ENCODE measurements at regions of chr10 and their contacts with region 1.

Region 1: GRCh38 chr10:48765039-48765438 is 80.4 kb downstream of the WDFY4 start:
- DNase-seq: no peak
- H3K4me3 ChIP-seq: no peak overlapping the region
- H3K27ac ChIP-seq: no peak overlapping the region
- H3K4me1 ChIP-seq: no peaks in the 10 kb centered on the region
- H3K27me3 ChIP-seq: no peaks in the 10 kb centered on the region
- CTCF ChIP-seq: peak in 1 of 2 donors; percentile 11

Region 2: DNA sequence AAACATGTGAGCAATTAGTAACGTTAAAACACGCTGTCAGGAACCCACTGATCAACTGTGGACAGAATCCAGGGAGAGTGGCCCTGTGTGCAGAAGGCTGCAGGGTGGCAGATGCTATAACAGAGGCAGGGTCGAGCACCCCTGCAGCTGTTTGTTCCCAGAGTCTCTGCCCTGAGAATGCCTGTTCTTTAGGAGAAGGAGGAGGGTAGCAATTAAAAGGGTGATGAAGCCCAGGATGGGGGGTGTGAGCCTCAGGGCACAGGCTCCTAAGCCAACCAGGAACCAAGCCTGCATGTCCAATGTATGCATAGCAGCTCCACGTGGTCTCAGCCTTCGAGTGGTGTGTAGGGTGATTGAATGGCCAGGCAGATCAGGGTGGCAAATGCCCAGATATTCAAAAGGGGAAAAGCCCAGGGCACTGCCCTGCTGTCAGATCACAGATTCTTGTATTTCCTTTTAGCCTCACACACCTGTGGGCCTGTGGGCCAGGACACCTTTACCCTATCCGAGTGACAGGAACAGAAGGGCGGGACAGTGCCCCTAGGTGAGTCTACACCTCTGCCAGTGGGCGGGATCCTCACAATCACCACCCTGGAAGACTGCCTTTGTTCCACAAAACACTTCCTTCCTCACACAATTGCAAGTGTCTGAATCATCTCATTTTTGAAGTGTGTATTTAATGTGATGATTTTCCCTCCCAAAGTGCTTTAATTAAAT is 73.1 kb before region 1 on chr10:
- CTCF ChIA-PET with region 1: no interaction called
- dilution Hi-C with region 1: loop called (anchors 5 kb)
- in situ Hi-C with region 1: no loop called
- intact Hi-C with region 1: no loop called
- DNase-seq: no peak
- H3K4me3 ChIP-seq: no peak overlapping the region
- H3K27ac ChIP-seq: no peak overlapping the region
- H3K4me1 ChIP-seq: no peaks in the 10 kb centered on the region
- H3K27me3 ChIP-seq: peaks cover 2% of the 10 kb centered on the region
- CTCF ChIP-seq: no peak

Region 3: DNA sequence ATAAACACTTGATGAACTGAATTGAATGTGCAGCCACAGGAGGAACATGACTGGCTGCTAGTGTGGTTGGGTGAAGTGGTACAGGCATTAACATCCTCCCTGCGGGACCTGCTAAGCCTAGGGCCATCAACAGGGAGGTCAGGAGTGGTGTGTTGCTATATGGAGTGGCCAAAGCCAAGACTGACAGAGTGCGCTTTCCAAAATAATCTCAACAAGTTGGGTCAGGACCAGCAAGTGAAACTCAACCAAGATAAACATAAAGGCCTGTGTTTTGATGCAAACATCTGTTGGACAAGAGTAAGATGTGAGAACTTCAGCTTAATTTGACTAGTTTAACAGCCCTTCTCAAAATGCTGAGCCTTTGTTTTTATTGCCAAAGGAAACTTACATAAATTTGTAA is 17.3 kb after region 1 on chr10:
- CTCF ChIA-PET with region 1: no interaction called
- dilution Hi-C with region 1: no loop called
- in situ Hi-C with region 1: no loop called
- intact Hi-C with region 1: no loop called
- DNase-seq: no peak
- H3K4me3 ChIP-seq: no peak overlapping the region
- H3K27ac ChIP-seq: no peak overlapping the region
- H3K4me1 ChIP-seq: no peaks in the 10 kb centered on the region
- H3K27me3 ChIP-seq: peaks cover 5% of the 10 kb centered on the region
- CTCF ChIP-seq: no peak

Region 4: DNA sequence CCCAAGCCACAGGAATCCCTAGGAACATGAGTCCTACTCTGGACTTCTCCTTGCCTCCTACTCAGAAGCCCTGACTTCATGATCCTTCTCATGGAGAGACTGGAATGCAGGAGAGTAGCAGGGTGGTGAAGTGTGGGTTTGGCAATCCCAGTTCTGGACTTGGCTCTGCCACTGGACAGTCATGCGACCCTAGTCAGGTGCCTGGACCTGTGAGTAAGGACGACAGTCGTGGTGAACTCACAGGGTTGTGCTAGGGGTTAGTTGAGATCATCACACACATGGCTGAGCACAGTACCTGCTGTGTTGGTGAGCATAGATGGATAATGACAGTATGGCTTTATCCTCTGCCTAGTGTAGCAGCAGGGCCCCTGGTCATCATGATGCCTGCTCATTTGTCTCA is 56.7 kb after region 1 on chr10:
- CTCF ChIA-PET with region 1: no interaction called
- dilution Hi-C with region 1: loop called (anchors 5 kb)
- in situ Hi-C with region 1: no loop called
- intact Hi-C with region 1: no loop called
- DNase-seq: peak; percentile 73
- H3K4me3 ChIP-seq: no peak overlapping the region
- H3K27ac ChIP-seq: no peak overlapping the region
- H3K4me1 ChIP-seq: peaks cover 9% of the 10 kb centered on the region
- H3K27me3 ChIP-seq: peaks cover 2% of the 10 kb centered on the region
- CTCF ChIP-seq: no peak

Region 5: GRCh38 chr10:49177391-49178355 is 412.6 kb after region 1 on chr10:
- CTCF ChIA-PET with region 1: no interaction called
- dilution Hi-C with region 1: no loop called
- in situ Hi-C with region 1: no loop called
- intact Hi-C with region 1: no loop called
- DNase-seq: peak; percentile 62
- H3K4me3 ChIP-seq: no peak overlapping the region
- H3K27ac ChIP-seq: no peak overlapping the region
- H3K4me1 ChIP-seq: peaks cover 11% of the 10 kb centered on the region
- H3K27me3 ChIP-seq: peaks cover under 1% of the 10 kb centered on the region
- CTCF ChIP-seq: no peak